Mucosa of descending colon (tissue), 3 donors: ENCODE measurements at regions of chr7 and their contacts with region 1.

Region 1: GRCh38 chr7:122225874-122226273 is 78.7 kb downstream of the FEZF1 start:
- DNase-seq: no peak
- ATAC-seq: no peak
- H3K4me3 ChIP-seq: no peak overlapping the region
- H3K4me1 ChIP-seq: no peaks in the 10 kb centered on the region
- CTCF ChIP-seq: no peak

Region 2: DNA sequence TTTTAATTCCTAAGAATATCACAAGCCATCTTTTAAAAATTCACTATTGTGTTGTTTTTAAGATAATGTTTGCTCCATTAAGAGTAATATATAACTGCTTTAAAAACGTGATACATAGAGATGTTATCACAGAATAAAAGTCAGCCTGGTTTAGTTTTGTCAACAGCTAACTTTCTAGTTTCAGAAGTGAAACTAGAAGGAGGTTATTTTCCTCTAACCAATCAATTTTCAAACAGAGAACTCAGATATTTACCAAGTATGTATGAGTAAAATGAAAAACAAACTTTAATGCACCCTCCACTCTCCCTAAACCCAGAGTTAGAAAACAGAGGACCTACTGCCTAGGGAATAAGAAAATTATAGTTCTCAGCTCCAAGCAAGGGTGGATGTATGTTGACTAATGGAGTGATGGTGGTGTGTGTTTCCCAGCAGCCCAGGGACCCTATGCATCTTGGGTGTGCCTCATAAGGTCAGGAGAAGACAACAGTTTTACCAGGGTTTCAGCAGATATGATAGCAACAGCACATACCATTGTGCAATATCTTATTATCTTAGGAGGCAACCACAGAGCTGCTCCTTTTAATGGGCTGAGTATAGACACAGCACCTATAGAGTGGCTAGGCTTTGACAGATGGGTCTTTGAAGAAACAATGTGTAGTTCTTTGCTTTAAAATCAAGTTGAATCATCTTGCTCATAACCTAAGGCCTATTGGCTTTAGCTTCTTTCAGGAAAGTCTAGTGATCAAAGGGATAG is 294.5 kb before region 1 on chr7:
- intact Hi-C with region 1: no loop called
- DNase-seq: no peak
- ATAC-seq: no peak
- H3K4me3 ChIP-seq: no peak overlapping the region
- H3K4me1 ChIP-seq: no peaks in the 10 kb centered on the region
- CTCF ChIP-seq: no peak

Region 3: DNA sequence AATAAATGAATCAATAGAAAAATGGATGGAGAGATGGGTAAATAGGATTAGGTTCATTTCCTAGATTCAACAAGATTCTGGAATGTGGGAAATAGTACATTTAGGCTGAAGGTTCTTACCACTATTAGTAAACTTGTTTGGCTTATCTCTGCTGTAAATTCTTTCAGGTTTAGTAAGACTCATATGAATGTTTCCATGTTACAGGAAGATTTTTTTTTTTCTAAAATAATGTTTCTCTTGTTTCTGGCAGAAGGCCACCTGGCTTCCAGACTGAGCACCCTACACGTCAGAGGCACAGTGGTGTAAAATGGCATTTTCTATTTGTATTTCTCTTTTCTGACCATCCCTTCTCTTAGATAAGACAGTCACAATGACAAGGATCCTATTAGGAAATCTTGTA is 59.2 kb before region 1 on chr7:
- intact Hi-C with region 1: no loop called
- DNase-seq: no peak
- ATAC-seq: no peak
- H3K4me3 ChIP-seq: no peak overlapping the region
- H3K4me1 ChIP-seq: no peaks in the 10 kb centered on the region
- CTCF ChIP-seq: no peak

Region 4: GRCh38 chr7:123148855-123149254 is 923.0 kb after region 1 on chr7:
- intact Hi-C with region 1: loop called in 1 of 2 experiments (anchors 10 kb)
- DNase-seq: no peak
- ATAC-seq: no peak
- H3K4me3 ChIP-seq: no peak overlapping the region
- H3K4me1 ChIP-seq: no peaks in the 10 kb centered on the region
- CTCF ChIP-seq: no peak